ENCODE measurements at regions of chr3 and their contacts with region 1.

Region 1: DNA sequence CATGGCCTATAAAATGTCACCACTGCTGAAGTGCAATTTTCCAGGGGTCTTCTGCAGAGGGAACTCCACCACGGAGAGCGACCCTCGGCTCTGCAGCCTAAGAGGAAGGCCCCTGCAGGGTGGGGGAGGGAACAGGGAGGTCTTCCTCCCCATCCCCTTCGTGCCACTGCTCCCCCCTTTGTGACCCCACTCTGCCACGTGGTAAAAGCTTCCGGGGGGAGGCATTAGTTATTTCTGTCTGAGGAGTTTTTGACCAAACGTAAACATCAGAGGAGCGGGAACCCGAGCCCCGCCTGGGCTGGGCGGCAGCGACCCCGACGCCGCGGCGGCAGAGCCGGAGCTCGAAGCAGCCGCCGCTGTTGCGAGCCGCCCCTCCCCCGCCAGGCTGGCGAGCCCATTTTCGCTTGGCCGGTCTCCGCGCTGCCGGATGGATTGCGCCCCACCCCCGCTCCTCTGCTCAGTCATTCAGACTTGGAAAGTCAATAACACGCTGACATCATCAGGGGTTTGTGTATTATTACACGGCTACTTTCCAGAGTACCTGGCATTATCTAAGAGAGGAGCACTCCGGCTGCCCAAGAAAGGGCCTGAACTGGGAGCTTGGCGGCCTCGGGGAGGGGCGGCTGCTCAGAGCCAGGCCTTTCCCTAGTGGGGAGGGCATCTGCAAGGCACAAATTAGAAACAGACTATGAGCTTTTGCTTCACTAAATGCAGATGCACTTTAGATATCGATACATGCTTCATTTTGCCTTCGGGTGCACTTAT is 162.5 kb upstream of the TBL1XR1 start:
- DNase-seq: peak; percentile 95 to 97 (median 96)
- ATAC-seq: peak; percentile 91 to 94 (median 92)
- H3K4me3 ChIP-seq: peak overlapping the region in 11 of 12 donors; percentile 4 to 57 (median 41)
- H3K27ac ChIP-seq: peak overlapping the region; percentile 73 to 95 (median 91)
- H3K4me1 ChIP-seq: peaks cover 11 to 68% (median 60%) of the 10 kb centered on the region in 12 donors
- H3K27me3 ChIP-seq: no peaks in the 10 kb centered on the region
- CTCF ChIP-seq: peak in 1 of 12 donors; percentile 15
- POLR2A ChIP-seq: no peak

Region 2: DNA sequence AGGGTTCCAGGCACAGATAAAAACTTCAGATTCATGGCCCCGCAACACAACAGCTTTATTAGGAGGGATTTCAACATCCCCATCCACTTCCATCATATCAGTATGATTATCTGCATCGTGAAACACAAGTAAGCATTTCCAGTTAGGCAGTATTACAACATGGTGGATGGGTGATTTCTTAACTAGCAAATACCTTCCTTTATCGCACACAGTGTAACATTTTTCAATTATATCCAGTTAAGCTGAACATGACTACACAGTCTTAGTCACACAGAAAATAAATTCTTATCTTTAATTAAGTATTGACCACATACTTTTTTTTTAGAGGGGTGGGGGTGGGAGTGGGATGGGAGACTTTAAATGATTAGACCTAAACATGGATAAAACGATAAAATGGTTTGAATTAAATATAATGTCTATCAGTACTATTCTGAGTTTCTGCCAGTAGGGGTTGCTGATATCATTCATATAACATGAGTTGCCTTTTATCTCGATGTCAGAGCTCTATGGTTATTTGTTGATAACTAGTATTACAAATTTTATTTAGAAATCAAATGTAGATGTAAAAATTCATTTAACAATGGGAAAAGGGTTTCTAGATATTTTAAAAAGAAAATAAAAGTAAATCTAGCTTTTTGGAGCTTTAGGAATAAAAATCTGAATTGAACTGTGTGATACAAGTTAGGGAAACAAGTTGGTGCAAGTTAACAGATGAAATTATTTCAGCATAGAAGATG is 309.1 kb before region 1 on chr3:
- intact Hi-C with region 1: loop called (anchors 2 to 10 kb)
- DNase-seq: no peak
- ATAC-seq: peak; percentile 53 to 74 (median 60)
- H3K4me3 ChIP-seq: no peak overlapping the region
- H3K27ac ChIP-seq: no peak overlapping the region
- H3K4me1 ChIP-seq: peaks cover 0 to 22% (median 14%) of the 10 kb centered on the region in 12 donors
- H3K27me3 ChIP-seq: no peaks in the 10 kb centered on the region
- CTCF ChIP-seq: peak; percentile 35 to 73 (median 63)
- POLR2A ChIP-seq: no peak

Region 3: GRCh38 chr3:177284383-177284881 is 75.3 kb before region 1 on chr3:
- intact Hi-C with region 1: loop called in 2 of 10 experiments (anchors 5 kb)
- DNase-seq: peak in 2 of 5 donors; percentile 16 to 52
- ATAC-seq: peak in 3 of 4 donors; percentile 49 to 77 (median 69)
- H3K4me3 ChIP-seq: no peak overlapping the region
- H3K27ac ChIP-seq: no peak overlapping the region
- H3K4me1 ChIP-seq: peaks cover 0 to 39% (median 6%) of the 10 kb centered on the region in 12 donors
- H3K27me3 ChIP-seq: no peaks in the 10 kb centered on the region
- CTCF ChIP-seq: peak in 2 of 12 donors; percentile 6 to 18
- POLR2A ChIP-seq: no peak

Region 4: DNA sequence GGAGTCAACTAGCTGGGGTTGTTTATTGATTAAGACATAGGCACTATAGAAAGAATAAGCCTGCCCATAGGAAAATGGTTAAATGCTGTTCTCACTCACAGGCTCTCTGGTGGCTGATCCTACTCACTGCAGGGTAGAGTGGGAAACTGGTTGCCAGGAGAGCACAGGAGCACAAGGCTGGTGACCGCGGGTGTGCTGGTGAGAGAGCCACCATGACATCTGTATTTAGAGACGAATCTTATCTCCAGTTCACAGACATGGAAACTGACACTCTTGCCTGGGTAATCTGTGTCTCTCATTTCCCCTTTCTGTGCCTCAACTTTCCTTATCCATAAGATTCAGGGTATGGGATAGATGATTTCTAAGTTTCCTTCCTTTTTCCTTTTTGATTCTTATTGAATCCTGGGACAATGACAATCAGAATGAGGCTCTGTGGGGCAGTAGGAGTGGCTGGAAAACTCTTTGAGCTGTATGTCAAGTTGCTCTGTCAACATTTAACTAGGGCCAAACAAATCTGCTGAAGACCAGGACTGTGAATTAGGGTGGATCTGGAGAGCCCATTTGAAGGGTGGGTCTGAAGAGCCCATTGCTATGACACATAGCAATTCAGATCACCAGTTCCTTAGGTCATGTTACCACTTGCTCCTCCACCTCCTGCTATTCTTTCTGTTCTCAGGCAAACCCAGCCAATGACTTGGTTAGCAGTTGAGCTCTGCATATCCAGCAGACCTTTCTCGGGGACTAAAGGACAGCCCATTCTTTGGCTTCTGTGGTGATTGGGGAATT is 123.6 kb after region 1 on chr3:
- intact Hi-C with region 1: loop called in 3 of 10 experiments (anchors 5 to 10 kb)
- DNase-seq: no peak
- ATAC-seq: no peak
- H3K4me3 ChIP-seq: no peak overlapping the region
- H3K27ac ChIP-seq: no peak overlapping the region
- H3K4me1 ChIP-seq: peaks cover 0 to 18% (median 5%) of the 10 kb centered on the region in 12 donors
- H3K27me3 ChIP-seq: no peaks in the 10 kb centered on the region
- CTCF ChIP-seq: peak in 2 of 12 donors; percentile 5 to 26
- POLR2A ChIP-seq: no peak

Region 5: DNA sequence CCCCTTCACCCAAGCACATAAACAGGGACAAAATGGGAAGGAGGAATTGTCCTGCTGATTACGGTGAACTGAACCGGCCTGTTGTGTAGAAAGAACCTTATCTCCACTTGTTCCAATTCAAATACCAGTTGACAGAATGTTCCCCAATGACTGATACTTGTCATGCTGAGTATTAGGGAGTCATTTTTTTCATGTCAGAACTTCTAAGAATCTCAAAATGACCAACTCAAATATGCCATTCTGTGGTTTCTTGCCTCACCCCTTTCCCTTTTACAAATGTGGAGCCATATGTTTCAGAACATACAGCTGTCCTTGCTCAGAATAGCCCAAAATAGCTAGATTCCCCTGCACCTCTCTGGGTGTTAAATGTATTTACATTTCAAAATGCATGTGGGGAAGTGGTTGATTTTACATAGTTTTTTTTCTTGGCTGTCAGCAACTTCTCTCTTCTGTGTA is 243.4 kb after region 1 on chr3:
- intact Hi-C with region 1: loop called in 2 of 10 experiments (anchors 10 kb)
- DNase-seq: no peak
- ATAC-seq: peak; percentile 20 to 81 (median 43)
- H3K4me3 ChIP-seq: no peak overlapping the region
- H3K27ac ChIP-seq: peak overlapping the region in 2 of 12 donors; percentile 20 to 74
- H3K4me1 ChIP-seq: peaks cover 0 to 58% (median 17%) of the 10 kb centered on the region in 12 donors
- H3K27me3 ChIP-seq: no peaks in the 10 kb centered on the region
- CTCF ChIP-seq: no peak
- POLR2A ChIP-seq: no peak

Region 6: GRCh38 chr3:177802151-177802900 is 442.6 kb after region 1 on chr3:
- intact Hi-C with region 1: loop called in 1 of 10 experiments (anchors 10 kb)
- DNase-seq: no peak
- ATAC-seq: peak in 2 of 4 donors; percentile 58 to 62
- H3K4me3 ChIP-seq: no peak overlapping the region
- H3K27ac ChIP-seq: no peak overlapping the region
- H3K4me1 ChIP-seq: peaks cover 0 to 3% (median 0%) of the 10 kb centered on the region in 12 donors
- H3K27me3 ChIP-seq: no peaks in the 10 kb centered on the region
- CTCF ChIP-seq: peak in 3 of 12 donors; percentile 10 to 32 (median 17)
- POLR2A ChIP-seq: no peak

Region 7: DNA sequence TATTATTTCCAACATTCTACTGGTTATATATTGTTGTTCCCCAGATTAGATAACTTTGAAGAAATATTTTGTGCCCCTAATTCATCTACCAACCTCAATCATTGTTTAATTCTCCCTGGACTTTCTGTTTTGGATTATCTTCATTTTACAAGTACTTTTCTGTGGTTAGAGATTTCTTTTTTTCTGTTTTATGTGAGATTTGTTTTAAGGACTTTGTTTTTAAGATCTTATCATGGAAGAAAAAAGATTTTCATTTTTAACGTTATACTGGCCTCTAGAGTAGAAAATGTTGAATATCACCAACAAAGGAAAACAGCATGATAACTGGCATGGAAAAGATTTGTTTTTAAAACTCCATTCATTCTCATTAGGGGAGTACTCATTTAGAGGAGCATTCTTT is 965.6 kb after region 1 on chr3:
- intact Hi-C with region 1: loop called in 6 of 10 experiments (anchors 5 to 10 kb)
- DNase-seq: no peak
- ATAC-seq: no peak
- H3K4me3 ChIP-seq: no peak overlapping the region
- H3K27ac ChIP-seq: peak overlapping the region in 5 of 12 donors; percentile 14 to 41 (median 32)
- H3K4me1 ChIP-seq: peaks cover 0 to 32% (median 19%) of the 10 kb centered on the region in 12 donors
- H3K27me3 ChIP-seq: no peaks in the 10 kb centered on the region
- CTCF ChIP-seq: peak; percentile 18 to 66 (median 48)
- POLR2A ChIP-seq: no peak